ENCODE measurements at regions of chr3 and their contacts with region 1.

Region 1: DNA sequence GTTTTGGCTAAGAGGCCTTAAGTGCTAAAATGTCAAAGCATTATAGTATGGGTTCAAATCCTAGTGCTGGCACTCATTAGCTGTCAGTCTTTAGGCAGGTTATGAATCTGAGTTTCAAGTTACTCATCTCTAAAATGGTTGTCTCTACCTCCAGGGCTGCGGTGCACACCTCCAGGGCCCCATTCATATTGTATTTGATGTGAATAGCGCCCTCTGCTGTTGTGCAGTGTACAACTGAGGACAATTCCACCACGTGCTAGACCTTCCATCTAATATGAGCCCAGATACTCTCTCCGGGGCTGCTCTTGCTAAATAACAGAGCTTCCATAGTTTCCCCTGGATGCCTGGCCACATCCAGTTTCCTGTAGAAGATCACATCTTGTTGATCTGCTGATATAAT is 54.3 kb downstream of the OXNAD1 start:
- DNase-seq: peak; percentile 38
- CTCF ChIP-seq: peak; percentile 29

Region 2: GRCh38 chr3:16332904-16333426 is 13.7 kb after region 1 on chr3:
- CTCF ChIA-PET with region 1: interaction called, 16 read pairs
- POLR2A ChIA-PET with region 1: no interaction called
- DNase-seq: no peak
- CTCF ChIP-seq: no peak

Region 3: GRCh38 chr3:16338999-16339398 is 19.7 kb after region 1 on chr3:
- CTCF ChIA-PET with region 1: interaction called, 16 read pairs
- POLR2A ChIA-PET with region 1: no interaction called
- DNase-seq: no peak
- CTCF ChIP-seq: no peak

Measured in GM10248 (cell line).